Posterior cingulate gyrus (tissue), 11 donors: ENCODE measurements at regions of chr6 and their contacts with region 1.

Region 1: DNA sequence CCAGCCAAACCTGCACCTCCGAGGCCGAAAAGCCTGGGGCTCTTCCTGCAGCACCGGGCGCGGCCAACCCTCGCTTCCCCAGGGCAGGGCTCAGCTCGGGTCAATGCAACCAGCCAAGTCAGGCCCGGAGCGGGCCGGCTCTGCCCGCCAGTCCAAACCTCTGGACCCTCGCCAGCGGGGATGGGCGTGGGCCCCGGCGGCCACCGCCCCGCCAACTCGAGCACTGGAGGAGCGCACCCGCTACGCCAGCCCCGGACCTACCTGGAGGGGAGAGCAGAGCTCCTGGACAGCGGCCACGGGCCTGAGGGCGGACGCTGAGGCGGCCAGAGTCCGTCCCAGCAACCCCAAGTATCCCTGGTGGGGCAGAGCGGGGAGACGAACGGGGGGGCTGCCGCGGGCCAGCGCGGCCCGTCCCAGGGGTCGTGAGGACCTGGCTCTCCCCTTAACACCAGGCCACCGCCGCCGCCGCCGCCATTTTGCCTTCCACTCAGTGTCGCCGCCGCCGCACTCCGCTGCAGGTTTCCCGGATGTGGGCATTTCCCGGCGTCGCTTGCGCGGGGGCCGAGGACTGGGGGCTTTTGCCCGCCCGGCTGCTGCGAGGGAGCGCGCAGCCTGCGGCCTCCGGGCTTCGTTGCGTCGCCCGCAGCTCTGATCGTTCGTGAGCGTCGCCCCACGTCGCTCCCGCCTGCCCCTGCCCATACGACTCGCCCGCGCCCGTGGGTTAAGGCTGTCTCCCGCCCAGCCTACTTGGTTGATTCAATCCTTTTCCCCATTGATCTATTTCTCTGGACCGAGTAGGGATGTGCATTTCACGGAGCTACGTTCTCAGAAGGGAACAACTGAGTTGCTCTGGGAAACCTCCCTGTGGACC is at the start of gene LATS1:
- DNase-seq: peak; percentile 87 to 98 (median 94)

Region 2: DNA sequence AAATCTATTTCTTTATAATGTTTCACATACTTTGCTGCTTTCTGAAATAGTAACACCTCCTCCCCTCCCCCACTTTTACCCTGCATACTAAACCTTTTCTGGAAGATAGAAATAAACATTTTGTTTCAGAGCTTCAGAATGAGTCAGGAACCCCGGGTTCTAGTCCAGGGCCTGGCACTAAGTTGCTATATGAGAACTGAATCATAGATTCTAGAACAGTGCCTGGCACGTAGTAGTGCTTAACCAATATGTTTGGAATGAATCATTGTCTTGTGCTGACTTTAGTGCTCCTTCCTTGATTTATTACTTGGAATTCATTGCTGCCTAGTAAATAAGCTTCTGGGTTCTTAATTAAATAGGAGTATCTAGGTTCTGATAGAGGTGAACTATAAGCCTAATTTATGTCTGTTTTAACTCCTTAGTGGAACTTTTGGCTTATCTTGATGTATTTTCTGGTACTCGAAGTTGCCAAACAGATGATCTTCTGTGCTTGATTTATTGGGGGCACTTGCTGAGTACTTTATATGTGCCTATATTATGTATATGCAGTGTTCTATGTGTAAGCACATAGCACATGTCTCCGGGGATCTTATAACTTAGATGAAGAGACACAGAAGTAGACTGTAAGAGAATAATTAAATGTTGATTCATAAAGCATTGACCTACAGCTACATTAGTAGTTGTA is 381.8 kb before region 1 on chr6:
- intact Hi-C with region 1: no loop called
- DNase-seq: no peak

Region 3: DNA sequence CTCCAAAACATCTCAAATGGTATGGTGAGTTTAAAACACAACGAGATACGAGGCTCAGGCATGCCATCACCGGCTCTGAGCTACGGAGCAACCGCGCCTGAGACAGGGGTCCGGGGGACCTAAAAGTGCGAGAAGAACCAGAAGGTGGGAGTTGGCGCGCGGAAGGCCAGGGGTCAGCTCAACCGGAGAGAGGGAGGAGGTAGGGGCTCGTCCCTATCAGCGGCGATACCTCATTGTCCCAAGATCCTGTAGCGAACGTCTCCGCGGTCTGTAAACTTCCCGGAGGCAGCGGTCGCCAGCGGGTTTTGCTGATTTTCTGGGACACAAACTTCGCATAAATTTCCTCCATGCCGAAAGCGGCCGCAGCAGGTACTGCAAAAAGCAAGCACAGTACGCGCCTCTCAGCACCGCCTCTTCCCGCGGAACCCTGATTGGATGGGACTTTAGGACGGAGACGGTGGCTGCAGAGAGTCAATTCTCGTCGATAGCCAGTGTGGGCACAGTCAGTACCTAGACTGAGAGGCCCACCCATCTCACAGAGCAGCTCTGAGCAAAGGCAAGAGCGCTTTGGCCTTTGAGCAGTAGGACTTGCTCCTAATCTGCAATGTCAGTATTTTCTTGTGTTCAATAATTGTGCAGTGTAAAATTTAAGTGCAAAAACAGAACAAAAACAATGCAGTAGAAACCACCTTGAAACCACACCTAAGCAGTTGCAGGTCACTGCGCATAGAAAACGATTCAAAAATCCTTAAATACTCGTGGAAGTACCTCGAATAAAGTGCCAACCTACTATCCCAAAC is 28.5 kb after region 1 on chr6 and contains the start of gene NUP43:
- intact Hi-C with region 1: loop called (anchors 1 kb)
- DNase-seq: peak; percentile 87 to 98 (median 92)

Region 4: DNA sequence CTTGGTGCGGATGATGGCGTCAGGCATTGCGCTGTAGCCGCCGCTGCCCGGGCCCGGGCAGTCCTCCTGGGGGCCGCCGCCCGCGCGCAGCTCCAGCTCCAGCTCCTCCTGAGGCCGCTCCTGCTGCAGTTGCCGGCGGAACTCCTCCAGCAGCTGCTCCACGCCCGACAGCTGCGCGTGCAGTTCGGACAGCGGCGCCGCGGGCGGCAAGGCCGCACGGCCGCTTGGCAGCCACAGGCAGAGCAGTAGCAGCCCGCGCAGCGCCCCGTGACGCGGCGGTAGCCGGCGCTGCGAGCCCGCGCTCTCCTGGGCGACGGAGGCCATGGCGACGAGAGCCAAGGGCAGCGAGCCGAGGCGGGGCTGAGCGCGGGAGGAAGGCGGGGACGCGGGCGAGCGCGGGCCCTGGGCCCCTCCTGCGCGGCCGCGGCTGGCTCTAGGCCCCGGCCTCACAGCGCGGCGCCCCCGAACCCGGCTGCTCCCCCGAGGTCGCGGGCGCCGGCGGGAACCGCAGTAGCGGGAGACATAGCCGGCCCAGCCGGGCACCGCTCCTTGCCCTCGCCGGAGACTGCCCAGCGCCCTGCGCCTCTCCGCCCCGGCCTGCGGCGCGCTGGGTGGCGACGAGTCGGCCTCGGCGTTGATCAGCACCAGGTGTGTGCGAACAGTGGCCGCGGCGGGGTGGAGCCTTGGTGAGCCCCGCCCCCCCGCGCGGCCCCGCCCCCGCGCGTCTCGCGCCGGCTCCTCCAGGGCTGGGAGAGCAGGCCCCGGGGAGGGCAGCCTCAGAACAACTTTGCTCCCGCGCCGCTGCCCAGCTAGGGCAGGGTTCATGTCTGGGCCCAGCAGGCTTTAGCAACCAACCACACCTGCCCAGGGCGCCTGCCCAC is 146.1 kb after region 1 on chr6 and contains the start of gene LRP11:
- intact Hi-C with region 1: loop called (anchors 5 kb)
- DNase-seq: peak; percentile 71 to 98 (median 88)